ENCODE measurements at regions of chr15 and their contacts with region 1.

Region 1: DNA sequence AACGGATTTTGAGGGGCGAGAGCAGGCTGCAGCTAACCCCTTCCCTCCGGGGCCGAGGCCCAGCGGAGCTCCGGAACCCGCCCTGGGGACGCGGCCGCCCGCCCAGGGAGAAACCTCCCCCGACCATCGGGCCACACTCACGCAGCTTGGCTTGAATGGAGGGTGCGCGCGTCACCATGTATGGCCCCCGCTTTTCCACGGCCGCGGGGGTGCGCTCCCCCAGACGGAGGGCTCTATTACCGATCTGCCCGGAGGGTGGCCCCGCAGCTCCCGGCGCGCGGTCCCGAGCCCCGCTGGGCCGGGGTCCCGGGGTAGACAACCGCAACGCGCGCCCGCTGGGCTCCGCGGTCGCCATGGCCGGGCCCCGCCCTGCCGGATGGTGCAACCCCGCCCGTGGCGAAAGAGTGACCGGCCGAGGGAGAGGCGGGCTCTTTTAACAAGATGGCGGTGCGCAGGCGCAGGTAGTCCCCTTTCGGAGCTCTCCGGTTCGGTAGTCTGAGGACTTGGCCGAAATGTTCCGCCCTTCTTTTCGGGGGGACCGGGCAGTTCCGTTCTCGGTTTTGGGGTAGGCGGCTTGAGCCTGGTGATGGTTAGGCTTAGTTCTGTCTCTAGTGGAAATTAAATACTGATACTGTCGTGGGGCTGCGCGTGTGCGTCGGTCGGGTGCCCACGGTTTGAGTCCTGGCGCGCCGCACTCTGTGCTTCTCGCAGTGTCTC is at the start of gene FAM219B:
- DNase-seq: peak; percentile 89
- H3K4me3 Mint-ChIP-seq: peak within 1 kb of the TSS; percentile 99
- H3K27ac Mint-ChIP-seq: peak within 1 kb of the TSS; percentile 97
- H3K4me1 Mint-ChIP-seq: peaks cover 32% of the 10 kb centered on the region
- H3K27me3 Mint-ChIP-seq: no peaks in the 10 kb centered on the region
- total RNA-seq, gene FAM219B: 63.0 to 70.1 TPM

Region 2: GRCh38 chr15:74635228-74635627 is 271.4 kb before region 1 on chr15:
- CTCF ChIA-PET with region 1: interaction called, 10 read pairs
- POLR2A ChIA-PET with region 1: no interaction called
- intact Hi-C with region 1: no loop called
- DNase-seq: peak; percentile 84
- H3K4me3 Mint-ChIP-seq: no peak overlapping the region
- H3K27ac Mint-ChIP-seq: no peak overlapping the region
- H3K4me1 Mint-ChIP-seq: no peaks in the 10 kb centered on the region
- H3K27me3 Mint-ChIP-seq: no peaks in the 10 kb centered on the region

Region 3: GRCh38 chr15:74799856-74800547 is 106.6 kb before region 1 on chr15:
- CTCF ChIA-PET with region 1: interaction called, 11 read pairs
- POLR2A ChIA-PET with region 1: no interaction called
- intact Hi-C with region 1: no loop called
- DNase-seq: peak; percentile 93
- H3K4me3 Mint-ChIP-seq: no peak overlapping the region
- H3K27ac Mint-ChIP-seq: peak overlapping the region; percentile 91
- H3K4me1 Mint-ChIP-seq: peaks cover 49% of the 10 kb centered on the region
- H3K27me3 Mint-ChIP-seq: no peaks in the 10 kb centered on the region

Region 4: DNA sequence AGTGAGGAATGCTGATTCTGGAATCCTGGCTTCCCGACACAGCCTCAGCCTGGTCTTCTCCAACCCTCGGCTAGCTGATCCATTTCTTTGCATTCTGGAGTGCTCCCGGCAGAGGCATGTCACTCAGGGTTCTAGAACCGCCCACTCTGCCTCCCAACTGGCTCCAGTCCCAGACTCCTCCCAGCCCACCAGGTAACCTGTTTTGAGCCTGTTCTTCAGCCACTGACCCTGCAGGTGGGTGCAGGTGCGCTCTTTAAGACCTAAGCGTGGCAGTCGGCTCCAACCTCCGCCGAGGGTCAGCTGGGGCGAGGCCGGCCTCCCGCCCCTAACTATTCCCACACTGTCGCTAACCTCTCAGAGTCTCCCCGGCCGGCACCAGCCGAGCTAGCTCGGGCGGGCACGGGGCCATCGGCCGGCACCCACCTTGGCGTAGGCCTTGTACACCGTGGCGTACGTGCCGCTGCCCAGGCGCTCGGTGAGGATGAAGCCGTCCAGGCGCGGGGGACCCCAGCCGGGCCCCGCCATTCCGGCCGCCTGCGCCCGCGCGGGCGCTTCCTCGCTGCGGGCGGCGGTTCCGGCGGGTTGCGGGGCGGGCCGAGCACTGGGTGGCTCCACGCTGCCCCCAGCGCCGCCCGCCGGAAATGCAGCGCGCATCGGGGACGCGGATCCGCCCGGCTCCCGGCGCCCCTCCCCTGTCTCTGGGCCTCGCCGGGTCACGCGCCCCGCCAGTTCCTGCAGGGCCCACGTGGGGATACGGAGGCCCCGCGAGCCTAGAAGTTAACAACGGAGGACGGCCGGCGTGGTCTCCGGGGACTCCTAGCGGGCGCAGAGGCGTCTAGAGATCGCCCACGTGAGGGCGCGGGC is 63.8 kb before region 1 on chr15 and contains the start of gene ULK3:
- CTCF ChIA-PET with region 1: interaction called, 41 read pairs
- POLR2A ChIA-PET with region 1: interaction called, 4 read pairs
- intact Hi-C with region 1: loop called (anchors 1 kb)
- DNase-seq: peak; percentile 95
- H3K4me3 Mint-ChIP-seq: peak within 1 kb of the TSS; percentile 92
- H3K27ac Mint-ChIP-seq: peak within 1 kb of the TSS; percentile 93
- H3K4me1 Mint-ChIP-seq: peaks cover 44% of the 10 kb centered on the region
- H3K27me3 Mint-ChIP-seq: no peaks in the 10 kb centered on the region
- total RNA-seq, gene ULK3: 51.4 to 57.6 TPM

Region 5: DNA sequence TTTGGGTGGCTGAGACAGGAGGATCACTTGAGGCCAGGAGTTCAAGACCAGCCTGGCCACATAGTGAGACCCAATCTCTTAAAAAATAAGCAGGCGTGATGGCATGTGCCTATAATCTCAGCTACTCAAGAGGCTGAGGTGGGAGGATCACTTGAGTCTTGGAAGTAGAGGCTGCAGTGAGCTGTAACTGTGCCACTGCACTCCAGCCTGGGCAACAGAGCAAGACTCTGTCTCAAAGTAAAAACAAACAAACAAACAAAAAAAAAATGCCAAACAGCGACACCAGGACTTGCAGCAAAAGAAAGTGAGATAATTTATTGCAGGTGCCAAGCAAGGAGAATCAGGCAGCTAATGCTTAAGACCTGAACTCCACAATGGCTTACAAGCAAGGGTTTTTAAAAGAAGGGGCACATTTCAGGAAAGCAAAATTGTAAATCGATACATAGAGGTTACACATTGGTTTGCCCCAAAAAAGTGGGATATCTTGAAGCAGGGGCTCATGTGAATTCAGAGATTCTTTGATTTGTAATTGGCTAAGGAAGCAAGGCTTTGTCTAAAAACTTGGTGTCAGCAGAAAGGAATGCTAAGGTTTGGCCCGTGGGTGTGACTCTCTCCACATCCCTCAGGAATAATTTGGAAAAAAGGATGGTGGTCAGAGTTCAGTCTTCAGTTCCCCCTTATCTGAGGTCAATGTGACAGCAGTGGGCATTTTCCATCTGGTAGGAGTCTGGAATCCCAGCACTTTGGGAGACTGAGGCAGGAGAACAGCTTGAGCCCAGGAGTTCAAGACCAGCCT is 22.0 kb before region 1 on chr15:
- CTCF ChIA-PET with region 1: interaction called, 37 read pairs
- POLR2A ChIA-PET with region 1: no interaction called
- intact Hi-C with region 1: no loop called
- DNase-seq: no peak
- H3K4me3 Mint-ChIP-seq: no peak overlapping the region
- H3K27ac Mint-ChIP-seq: no peak overlapping the region
- H3K4me1 Mint-ChIP-seq: peaks cover 18% of the 10 kb centered on the region
- H3K27me3 Mint-ChIP-seq: no peaks in the 10 kb centered on the region

Region 6: GRCh38 chr15:74950078-74951000 is 43.7 kb after region 1 on chr15:
- CTCF ChIA-PET with region 1: interaction called, 18 read pairs
- POLR2A ChIA-PET with region 1: no interaction called
- intact Hi-C with region 1: loop called (anchors 5 kb)
- DNase-seq: peak; percentile 86
- H3K4me3 Mint-ChIP-seq: no peak overlapping the region
- H3K27ac Mint-ChIP-seq: no peak overlapping the region
- H3K4me1 Mint-ChIP-seq: peaks cover 9% of the 10 kb centered on the region
- H3K27me3 Mint-ChIP-seq: no peaks in the 10 kb centered on the region

Measured in activated CD4-positive, alpha-beta memory T cell treated with anti-CD3 and anti-CD28 coated beads for 36 hours (primary cell).